Activated naive CD8-positive, alpha-beta T cell treated with anti-CD3 and anti-CD28 coated beads, Interleukin-2, amount 10 ng/mL, durations not matched to agents 7 days and 5 days (primary cell): ENCODE measurements at regions of chr15 and their contacts with region 1.

Region 1: DNA sequence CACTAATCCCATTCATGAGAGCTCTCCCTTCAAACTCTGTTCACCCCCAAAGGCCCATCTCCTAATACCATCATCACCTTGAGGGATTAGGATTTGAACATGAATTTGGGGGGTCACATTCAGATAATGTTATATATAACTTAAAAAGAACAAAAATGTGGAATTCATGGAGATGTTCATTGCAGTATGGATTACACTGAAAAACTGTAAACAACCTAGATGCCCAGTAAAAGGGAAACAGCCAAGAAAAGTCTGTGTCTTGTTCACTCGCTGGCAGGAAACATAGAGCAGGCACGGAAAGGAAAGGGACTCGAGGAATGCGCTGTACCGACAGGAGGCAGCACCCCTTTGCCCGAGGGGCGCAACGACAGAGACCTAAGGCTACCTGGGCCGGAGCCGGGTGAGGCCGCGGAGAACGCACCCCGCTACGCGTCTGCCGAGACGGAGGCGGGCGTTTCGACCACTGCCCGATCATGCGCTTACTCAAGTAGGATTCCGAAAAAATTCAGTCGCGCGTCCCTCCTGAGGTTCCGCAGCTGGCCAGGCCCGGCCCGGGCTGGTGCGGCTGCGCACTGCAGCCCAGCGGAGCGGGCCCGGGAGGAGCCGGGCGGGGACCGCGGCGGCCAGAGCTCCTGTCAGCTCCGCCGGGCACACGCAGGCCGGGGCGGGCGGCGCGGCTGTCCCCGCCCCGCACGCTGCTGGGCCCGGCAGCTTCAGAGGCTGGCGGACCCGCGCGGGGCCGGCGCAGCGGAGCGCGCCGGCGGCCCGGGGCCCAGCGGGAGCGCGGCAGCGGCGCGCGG is 862 bp upstream of the MAN2A2 start:
- DNase-seq: peak; percentile 84
- ATAC-seq: peak; percentile 78
- H3K4me3 Mint-ChIP-seq: peak overlapping the region; percentile 83
- H3K27ac Mint-ChIP-seq: peak overlapping the region; percentile 83
- H3K4me1 Mint-ChIP-seq: peaks cover 25% of the 10 kb centered on the region
- H3K27me3 Mint-ChIP-seq: no peaks in the 10 kb centered on the region

Region 2: DNA sequence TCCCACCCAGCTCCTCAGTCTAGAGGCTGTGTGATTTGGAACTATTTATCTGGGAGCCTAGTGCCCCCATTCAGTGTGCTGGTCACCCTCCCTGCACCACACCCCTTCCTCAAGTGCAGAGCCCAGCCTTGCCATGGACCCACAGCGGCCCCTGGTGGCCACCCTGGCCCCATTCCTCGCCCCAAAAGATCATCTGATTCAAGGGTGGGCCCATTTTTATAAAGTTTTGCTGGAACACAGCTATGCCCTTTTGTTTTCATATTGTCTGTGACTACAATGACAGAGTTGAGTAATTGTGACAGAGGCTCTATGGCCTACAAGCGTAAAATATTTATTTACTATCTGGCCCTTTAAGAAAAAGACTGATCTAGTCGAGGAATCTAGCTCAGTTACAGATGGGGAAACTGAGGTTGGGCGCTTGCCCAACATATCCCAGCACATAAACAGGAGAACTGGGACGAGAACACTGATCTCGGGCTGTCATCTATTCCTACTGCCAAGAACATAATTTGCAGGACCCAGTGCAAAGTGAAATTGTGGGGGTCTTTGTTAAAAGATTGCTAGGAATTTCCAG is 16.1 kb before region 1 on chr15:
- POLR2A ChIA-PET with region 1: interaction called, 10 read pairs
- DNase-seq: peak; percentile 88
- ATAC-seq: peak; percentile 64
- H3K4me3 Mint-ChIP-seq: peak overlapping the region; percentile 60
- H3K27ac Mint-ChIP-seq: peak overlapping the region; percentile 81
- H3K4me1 Mint-ChIP-seq: peaks cover 18% of the 10 kb centered on the region
- H3K27me3 Mint-ChIP-seq: no peaks in the 10 kb centered on the region

Region 3: GRCh38 chr15:90915216-90915807 is 13.1 kb after region 1 on chr15:
- POLR2A ChIA-PET with region 1: interaction called, 17 read pairs
- DNase-seq: no peak
- ATAC-seq: no peak
- H3K4me3 Mint-ChIP-seq: no peak overlapping the region
- H3K27ac Mint-ChIP-seq: no peak overlapping the region
- H3K4me1 Mint-ChIP-seq: peaks cover 2% of the 10 kb centered on the region
- H3K27me3 Mint-ChIP-seq: no peaks in the 10 kb centered on the region